Activated naive CD4-positive, alpha-beta T cell treated with anti-CD3 and anti-CD28 coated beads for 36 hours (primary cell): ENCODE measurements at regions of chr12 and their contacts with region 1.

Region 1: DNA sequence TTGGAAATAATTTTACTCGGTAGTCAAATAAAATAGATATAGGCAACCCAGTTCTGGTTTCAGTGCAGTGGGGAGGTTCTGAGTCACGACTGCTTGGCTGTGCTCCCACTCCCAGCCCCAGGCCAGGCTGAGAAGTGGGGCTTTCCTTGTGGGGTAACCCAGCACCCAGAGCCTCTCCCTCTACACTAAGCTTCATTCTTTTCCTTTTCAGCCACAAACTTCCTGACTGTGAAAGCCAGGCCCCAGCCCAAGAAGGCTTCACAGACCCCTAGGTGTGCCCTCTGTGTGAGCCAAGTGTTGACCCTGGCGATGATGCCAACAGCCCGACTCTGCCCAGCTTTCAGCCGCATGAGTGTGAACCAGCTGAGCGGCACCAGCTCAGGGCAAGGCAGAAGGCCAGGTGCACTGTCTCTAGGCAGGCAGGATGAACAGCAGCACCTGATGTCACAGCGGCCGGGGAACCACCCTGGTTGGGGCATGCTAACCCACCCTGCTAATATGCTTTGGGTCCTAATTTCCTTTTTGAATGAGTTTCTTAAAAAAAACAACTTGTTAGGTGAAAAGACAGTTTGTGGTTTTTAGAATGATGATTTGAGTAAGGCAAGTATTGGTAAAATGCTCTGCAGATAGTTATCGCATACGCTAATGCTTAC is 42.2 kb upstream of the ATP23 start:
- DNase-seq: peak; percentile 95
- H3K4me3 Mint-ChIP-seq: peak overlapping the region; percentile 69
- H3K27ac Mint-ChIP-seq: peak overlapping the region; percentile 99
- H3K4me1 Mint-ChIP-seq: peaks cover 60% of the 10 kb centered on the region
- H3K27me3 Mint-ChIP-seq: no peaks in the 10 kb centered on the region

Region 2: DNA sequence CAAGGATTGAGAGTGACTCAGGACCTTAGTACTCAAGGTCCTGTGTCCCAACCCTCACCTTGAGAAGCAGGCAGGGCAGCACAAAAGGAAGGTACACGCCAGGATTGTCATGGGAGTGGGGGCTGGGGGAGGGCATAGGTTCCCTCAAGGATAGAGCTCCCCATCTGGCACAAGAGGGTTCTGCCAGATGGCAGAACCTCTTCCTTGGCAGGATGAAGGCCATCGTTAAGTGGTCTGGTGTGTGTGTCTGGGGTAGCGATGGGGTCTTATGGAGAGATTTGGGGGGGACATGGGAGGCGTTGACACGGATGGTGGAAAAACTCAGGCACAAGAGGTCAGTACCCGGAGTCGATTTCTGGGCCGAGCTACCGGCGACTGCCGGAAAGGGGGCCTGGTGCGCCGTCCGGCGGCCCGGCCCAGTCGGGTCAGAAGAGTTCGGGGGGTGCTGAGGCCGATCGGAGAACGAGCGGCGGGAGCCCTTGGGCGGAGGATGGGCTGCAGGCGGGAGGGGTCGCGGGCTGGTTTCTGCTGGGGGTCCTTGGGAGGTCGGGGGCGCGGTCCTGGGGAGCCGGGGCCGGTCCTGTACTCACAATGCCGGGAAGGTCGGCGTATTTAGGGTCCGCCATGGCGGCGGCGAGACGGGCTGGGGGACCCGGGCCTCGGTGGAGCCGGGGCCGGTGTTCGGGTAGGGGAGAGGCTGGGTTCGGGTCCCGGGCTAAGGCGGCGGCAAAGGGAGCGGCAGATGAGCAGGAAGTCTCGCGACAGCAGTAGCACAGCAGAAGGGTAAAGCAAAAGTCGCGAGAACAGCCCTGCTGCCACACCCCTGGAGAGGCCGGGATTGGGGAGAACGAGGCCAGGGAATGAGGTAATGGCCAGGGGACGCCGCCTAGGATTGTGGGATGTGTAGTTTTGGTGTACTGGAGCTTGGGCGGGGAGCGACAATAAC is 352.4 kb before region 1 on chr12 and contains the start of gene DCTN2:
- CTCF ChIA-PET with region 1: no interaction called
- intact Hi-C with region 1: loop called (anchors 10 kb)
- DNase-seq: peak; percentile 98
- H3K4me3 Mint-ChIP-seq: peak within 1 kb of the TSS; percentile 91
- H3K27ac Mint-ChIP-seq: peak within 1 kb of the TSS; percentile 82
- H3K4me1 Mint-ChIP-seq: peaks cover 47% of the 10 kb centered on the region
- H3K27me3 Mint-ChIP-seq: no peaks in the 10 kb centered on the region
- total RNA-seq, gene DCTN2: 65.1 to 71.7 TPM

Region 3: DNA sequence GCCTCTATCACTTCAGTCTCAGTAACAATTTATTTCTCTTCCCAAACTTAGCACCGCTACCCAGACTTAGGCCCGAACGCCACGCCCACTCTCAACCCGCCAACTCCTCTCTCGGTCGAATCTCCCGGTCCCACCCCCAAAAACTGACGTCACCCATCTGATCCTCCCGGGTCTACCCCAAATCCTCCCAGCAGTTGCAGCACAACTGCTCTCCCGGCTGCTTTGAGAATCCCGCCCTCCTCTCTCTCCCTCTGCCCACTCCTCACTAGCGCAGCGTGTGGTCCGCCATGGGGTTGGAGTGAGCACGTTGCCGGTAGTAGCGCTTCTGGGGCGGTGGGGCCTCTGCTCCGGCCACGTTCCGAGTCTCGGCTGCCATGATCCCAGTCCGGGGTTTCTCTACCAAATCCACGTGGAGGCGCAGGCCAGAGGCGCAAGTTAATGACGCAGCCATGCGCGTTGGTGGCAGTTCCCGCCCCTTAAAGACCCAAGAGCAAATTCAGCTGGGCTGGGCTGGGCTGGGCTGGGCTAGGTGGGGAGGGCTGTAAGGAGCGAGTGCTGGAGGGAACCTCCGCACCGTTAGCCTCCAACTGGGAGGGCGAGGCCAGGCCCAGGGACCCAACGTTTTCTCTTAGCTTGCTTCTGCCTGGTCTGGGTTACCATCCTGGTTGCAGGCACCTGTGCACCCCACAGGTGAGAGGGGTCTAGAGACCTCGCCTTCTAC is 127.3 kb before region 1 on chr12 and contains the start of gene METTL1:
- CTCF ChIA-PET with region 1: interaction called, 5 read pairs
- intact Hi-C with region 1: loop called (anchors 1 kb)
- DNase-seq: peak; percentile 97
- H3K4me3 Mint-ChIP-seq: peak within 1 kb of the TSS; percentile 98
- H3K27ac Mint-ChIP-seq: peak within 1 kb of the TSS; percentile 95
- H3K4me1 Mint-ChIP-seq: peaks cover 26% of the 10 kb centered on the region
- H3K27me3 Mint-ChIP-seq: peaks cover 2% of the 10 kb centered on the region
- total RNA-seq, gene METTL1: 17.3 to 20.4 TPM

Region 4: GRCh38 chr12:57846577-57847319 is 52.4 kb before region 1 on chr12 and contains the start of gene CTDSP2:
- CTCF ChIA-PET with region 1: interaction called, 68 read pairs
- intact Hi-C with region 1: loop called (anchors 1 kb)
- DNase-seq: peak; percentile 93
- H3K4me3 Mint-ChIP-seq: peak within 1 kb of the TSS; percentile 88
- H3K27ac Mint-ChIP-seq: peak within 1 kb of the TSS; percentile 92
- H3K4me1 Mint-ChIP-seq: peaks cover 44% of the 10 kb centered on the region
- H3K27me3 Mint-ChIP-seq: peaks cover 7% of the 10 kb centered on the region
- total RNA-seq, gene CTDSP2: 94.6 to 99.8 TPM

Region 5: GRCh38 chr12:57888409-57889157 is 10.6 kb before region 1 on chr12:
- CTCF ChIA-PET with region 1: interaction called, 7 read pairs
- intact Hi-C with region 1: loop called (anchors 1 kb)
- DNase-seq: peak; percentile 77
- H3K4me3 Mint-ChIP-seq: no peak overlapping the region
- H3K27ac Mint-ChIP-seq: peak overlapping the region; percentile 47
- H3K4me1 Mint-ChIP-seq: peaks cover 15% of the 10 kb centered on the region
- H3K27me3 Mint-ChIP-seq: no peaks in the 10 kb centered on the region